Sciatic nerve (tissue), 2 donors: ENCODE measurements at regions of chr5 and their contacts with region 1.

Region 1: GRCh38 chr5:144169904-144170275 is 569 bp downstream of the YIPF5 start:
- DNase-seq: no peak
- ATAC-seq: no peak

Region 2: GRCh38 chr5:143074414-143074996 is 1095.4 kb before region 1 on chr5:
- intact Hi-C with region 1: no loop called
- DNase-seq: no peak
- ATAC-seq: no peak

Region 3: DNA sequence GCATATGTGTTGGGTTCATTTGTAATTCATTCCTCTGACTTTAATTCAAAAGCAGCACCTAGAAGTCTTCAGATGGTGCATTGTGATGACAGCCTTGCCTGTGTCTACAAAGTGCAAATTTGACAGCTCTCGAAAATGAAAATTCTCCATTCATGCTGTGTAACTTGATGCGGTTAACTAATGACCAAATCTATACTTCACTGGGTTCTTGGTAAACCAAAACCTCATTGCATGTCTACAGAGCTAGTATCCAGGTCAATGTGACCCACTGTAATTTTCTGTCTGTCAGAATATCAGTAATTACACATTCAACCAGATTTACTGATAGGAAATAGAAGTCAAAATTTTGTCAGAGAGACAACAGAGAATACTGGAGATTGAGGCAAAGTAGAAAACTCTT is 65.8 kb before region 1 on chr5:
- intact Hi-C with region 1: loop called (anchors 5 kb)
- DNase-seq: no peak
- ATAC-seq: no peak

Region 4: GRCh38 chr5:144503123-144503522 is 333.2 kb after region 1 on chr5:
- intact Hi-C with region 1: no loop called
- DNase-seq: no peak
- ATAC-seq: no peak